ENCODE measurements at regions of chr14 and their contacts with region 1.

Region 1: GRCh38 chr14:37874429-37875191 is 279.2 kb downstream of the TTC6 start:
- DNase-seq: peak; percentile 89
- H3K4me3 Mint-ChIP-seq: no peak overlapping the region
- H3K27ac Mint-ChIP-seq: no peak overlapping the region
- H3K4me1 Mint-ChIP-seq: peaks cover 6% of the 10 kb centered on the region
- H3K27me3 Mint-ChIP-seq: no peaks in the 10 kb centered on the region

Region 2: DNA sequence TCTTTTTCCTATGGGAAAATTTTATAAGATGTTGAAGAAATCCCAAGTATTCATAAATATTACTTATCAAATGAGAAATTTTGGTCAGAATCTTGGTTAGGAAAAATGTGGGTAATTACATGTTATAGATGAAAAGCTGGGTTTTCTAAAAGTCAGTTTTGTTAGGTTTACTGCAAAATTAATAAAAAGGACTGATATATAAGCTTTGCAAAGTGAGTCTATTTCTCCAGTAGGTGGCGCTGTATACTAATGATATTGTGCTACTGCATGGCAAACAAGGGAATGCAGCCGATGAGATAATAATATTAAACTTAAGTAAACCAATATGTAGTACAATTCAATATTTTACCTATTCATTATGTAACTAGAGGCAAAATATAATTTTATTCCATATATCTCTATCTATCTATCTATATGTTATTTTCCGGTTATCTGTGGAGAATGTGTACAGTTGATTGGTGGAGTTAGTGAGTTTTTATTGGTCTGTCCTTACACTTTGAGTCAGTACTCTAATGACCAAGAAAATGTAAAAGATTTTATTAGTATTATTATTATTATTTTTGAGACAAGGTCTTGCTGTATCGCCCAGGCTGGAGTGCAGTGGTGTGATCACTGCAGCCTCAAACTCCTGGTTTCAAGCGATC is 643.9 kb before region 1 on chr14:
- CTCF ChIA-PET with region 1: interaction called, 25 read pairs
- POLR2A ChIA-PET with region 1: no interaction called
- intact Hi-C with region 1: loop called (anchors 1 kb)
- DNase-seq: no peak
- H3K4me3 Mint-ChIP-seq: no peak overlapping the region
- H3K27ac Mint-ChIP-seq: no peak overlapping the region
- H3K4me1 Mint-ChIP-seq: no peaks in the 10 kb centered on the region
- H3K27me3 Mint-ChIP-seq: no peaks in the 10 kb centered on the region

Region 3: DNA sequence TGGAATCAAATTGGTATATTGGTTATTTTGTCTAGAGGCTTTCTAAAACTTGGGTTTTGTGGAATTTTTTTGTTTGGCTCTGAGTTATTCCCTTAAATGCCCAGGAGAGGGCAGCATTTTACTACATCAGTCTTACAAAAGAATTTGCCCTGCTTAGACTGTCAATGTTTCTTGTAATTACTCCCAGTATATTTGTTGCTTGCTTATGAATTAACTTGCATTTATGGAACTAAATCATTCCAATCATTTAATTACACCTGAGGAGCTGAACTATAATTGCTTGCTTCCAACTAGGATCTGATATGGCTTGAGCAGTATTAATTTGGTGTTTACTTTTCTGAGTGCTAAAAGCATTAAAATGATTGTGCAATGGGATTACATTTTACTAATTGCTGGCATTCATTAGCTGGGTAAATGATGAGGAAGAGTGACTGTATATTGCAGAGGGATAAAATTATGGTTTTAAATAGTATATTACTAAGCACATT is 628.1 kb before region 1 on chr14:
- CTCF ChIA-PET with region 1: interaction called, 42 read pairs
- POLR2A ChIA-PET with region 1: no interaction called
- intact Hi-C with region 1: loop called (anchors 1 kb)
- DNase-seq: no peak
- H3K4me3 Mint-ChIP-seq: no peak overlapping the region
- H3K27ac Mint-ChIP-seq: no peak overlapping the region
- H3K4me1 Mint-ChIP-seq: no peaks in the 10 kb centered on the region
- H3K27me3 Mint-ChIP-seq: peaks cover 1% of the 10 kb centered on the region

Region 4: GRCh38 chr14:37251778-37252177 is 622.8 kb before region 1 on chr14:
- CTCF ChIA-PET with region 1: interaction called, 42 read pairs
- POLR2A ChIA-PET with region 1: no interaction called
- intact Hi-C with region 1: loop called (anchors 1 kb)
- DNase-seq: no peak
- H3K4me3 Mint-ChIP-seq: no peak overlapping the region
- H3K27ac Mint-ChIP-seq: no peak overlapping the region
- H3K4me1 Mint-ChIP-seq: no peaks in the 10 kb centered on the region
- H3K27me3 Mint-ChIP-seq: no peaks in the 10 kb centered on the region

Region 5: DNA sequence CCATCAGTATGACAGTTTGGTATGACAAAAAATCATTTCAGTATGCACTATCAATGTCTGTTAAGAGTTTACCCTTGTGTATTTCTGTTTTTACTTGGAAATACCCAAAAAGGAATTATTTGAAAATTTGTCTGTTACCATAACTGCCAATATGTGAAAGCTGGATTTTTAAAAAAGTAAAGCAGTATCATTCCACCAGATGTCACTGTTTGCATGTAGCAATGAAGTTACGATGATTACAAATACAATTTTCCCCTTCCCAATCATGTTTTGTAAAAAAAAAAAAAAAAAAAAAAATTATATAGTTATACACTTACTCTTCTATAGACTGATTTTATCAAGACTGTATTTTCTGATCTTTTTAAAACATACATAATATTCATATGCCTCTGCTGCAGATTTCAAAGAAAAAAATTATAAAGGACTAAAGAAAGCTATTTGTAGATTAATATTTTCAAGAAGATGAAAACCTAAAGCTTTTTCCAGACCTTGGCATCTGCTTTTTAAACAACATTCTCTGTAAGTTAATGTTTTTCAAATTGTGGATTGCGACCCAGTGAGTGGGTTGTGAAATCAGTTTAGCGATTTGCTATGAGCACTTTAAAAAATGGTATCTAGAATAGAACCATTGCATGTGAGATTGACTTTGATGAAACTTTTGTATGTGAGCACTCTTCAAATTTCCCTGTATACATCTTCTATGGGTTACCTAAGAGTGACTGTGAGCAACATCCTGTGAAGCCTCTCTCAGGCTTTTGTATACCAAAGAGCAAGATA is 165.0 kb before region 1 on chr14:
- CTCF ChIA-PET with region 1: interaction called, 4 read pairs
- POLR2A ChIA-PET with region 1: no interaction called
- intact Hi-C with region 1: loop called (anchors 5 kb)
- DNase-seq: no peak
- H3K4me3 Mint-ChIP-seq: no peak overlapping the region
- H3K27ac Mint-ChIP-seq: no peak overlapping the region
- H3K4me1 Mint-ChIP-seq: no peaks in the 10 kb centered on the region
- H3K27me3 Mint-ChIP-seq: no peaks in the 10 kb centered on the region

Region 6: GRCh38 chr14:37916302-37916701 is 41.7 kb after region 1 on chr14:
- CTCF ChIA-PET with region 1: no interaction called
- POLR2A ChIA-PET with region 1: no interaction called
- intact Hi-C with region 1: no loop called
- DNase-seq: no peak
- H3K4me3 Mint-ChIP-seq: no peak overlapping the region
- H3K27ac Mint-ChIP-seq: no peak overlapping the region
- H3K4me1 Mint-ChIP-seq: no peaks in the 10 kb centered on the region
- H3K27me3 Mint-ChIP-seq: no peaks in the 10 kb centered on the region

Region 7: DNA sequence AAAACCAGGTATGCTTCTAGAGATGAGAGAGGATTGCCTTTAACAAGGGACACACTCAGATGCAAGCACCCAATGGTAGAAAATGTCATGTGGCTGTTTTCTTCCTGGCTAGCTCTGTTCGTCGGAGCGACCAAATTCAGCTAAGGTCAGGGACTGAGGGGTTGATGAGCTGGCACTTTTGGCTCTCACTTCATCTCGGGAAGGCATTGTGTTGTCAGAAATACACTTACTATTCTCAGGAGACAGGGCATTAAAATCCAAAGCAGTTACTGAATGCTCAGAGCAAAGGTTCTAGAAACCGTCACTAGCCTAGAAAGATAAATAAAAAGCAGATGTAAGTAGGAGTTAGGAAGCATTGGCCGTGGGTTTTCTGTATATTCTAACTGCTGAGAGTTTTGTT is 57.4 kb after region 1 on chr14:
- CTCF ChIA-PET with region 1: no interaction called
- POLR2A ChIA-PET with region 1: no interaction called
- intact Hi-C with region 1: no loop called
- DNase-seq: no peak
- H3K4me3 Mint-ChIP-seq: no peak overlapping the region
- H3K27ac Mint-ChIP-seq: no peak overlapping the region
- H3K4me1 Mint-ChIP-seq: no peaks in the 10 kb centered on the region
- H3K27me3 Mint-ChIP-seq: no peaks in the 10 kb centered on the region

Measured in activated CD4-positive, alpha-beta memory T cell treated with anti-CD3 and anti-CD28 coated beads for 36 hours (primary cell).